PC-9 (cell line): ENCODE measurements at regions of chr6 and their contacts with region 1.

Region 1: DNA sequence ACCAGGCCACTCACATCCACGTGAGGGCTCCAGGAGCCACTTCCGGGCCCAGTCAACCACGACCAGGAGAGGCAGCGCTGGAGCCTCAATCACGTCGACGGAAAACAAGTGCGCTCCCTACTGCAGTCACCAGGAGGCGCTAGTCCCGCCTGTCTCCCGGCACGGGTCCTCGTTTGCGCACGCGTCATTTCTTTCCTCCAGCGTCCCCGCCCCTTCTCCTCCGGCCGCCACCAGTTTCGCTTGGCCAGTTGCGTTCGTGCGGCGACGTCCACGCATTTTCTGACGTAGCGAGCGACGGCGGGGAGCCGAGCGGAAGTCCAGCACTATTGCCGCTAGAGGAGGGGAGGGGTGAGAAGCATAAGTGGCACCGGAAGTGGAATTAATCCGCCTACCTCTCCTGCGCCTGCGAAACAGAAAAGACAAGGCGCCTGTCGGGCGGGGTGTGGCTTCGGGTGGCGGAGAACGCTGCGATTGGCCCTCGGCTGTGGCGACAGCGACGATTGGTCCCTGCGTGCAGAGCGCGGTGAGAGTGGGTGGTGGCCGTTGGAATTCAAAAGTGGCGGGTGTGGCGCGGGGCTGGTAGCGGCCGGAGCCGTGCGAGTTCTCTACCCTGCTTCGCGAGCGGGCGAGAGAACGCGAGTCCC is at the start of gene KIFC1:
- DNase-seq: peak; percentile 98
- H3K4me3 ChIP-seq: peak within 1 kb of the TSS; percentile 63
- H3K27ac ChIP-seq: peak within 1 kb of the TSS; percentile 78
- H3K4me1 ChIP-seq: peaks cover 39% of the 10 kb centered on the region
- H3K27me3 ChIP-seq: no peaks in the 10 kb centered on the region
- CTCF ChIP-seq: peak; percentile 90
- total RNA-seq, gene KIFC1: 82.9 and 91.4 TPM in 2 replicates

Region 2: DNA sequence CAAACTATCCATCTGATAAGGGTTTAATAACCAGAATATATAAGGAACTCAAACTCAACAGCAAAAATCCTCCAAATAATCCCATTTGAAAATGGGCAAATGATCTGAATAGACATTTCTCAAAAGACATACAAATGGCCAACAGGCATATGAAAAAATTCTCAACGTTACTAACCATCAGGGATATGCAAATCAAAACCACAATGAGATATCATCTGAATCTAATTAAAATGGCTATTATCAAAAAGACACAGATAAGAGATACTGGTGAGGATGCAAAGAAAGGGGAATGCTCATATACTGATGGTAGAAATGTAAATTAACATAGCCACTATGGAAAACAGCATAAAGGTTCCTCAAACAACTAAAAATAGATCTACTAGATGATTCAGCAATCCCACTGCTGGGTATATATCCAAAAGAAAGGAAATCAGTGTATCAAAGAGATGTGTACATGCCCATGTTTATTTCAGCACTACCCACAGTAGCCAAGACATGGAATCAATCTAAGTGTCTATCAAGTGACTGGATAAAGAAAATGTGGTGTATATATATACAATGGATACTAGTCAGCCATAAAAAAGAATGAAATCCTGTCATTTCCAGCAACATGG is 429.1 kb before region 1 on chr6:
- CTCF ChIA-PET with region 1: no interaction called
- POLR2A ChIA-PET with region 1: interaction called, 60 read pairs
- intact Hi-C with region 1: no loop called
- DNase-seq: no peak
- H3K4me3 ChIP-seq: no peak overlapping the region
- H3K27ac ChIP-seq: no peak overlapping the region
- H3K4me1 ChIP-seq: peaks cover 11% of the 10 kb centered on the region
- H3K27me3 ChIP-seq: no peaks in the 10 kb centered on the region
- CTCF ChIP-seq: no peak

Region 3: DNA sequence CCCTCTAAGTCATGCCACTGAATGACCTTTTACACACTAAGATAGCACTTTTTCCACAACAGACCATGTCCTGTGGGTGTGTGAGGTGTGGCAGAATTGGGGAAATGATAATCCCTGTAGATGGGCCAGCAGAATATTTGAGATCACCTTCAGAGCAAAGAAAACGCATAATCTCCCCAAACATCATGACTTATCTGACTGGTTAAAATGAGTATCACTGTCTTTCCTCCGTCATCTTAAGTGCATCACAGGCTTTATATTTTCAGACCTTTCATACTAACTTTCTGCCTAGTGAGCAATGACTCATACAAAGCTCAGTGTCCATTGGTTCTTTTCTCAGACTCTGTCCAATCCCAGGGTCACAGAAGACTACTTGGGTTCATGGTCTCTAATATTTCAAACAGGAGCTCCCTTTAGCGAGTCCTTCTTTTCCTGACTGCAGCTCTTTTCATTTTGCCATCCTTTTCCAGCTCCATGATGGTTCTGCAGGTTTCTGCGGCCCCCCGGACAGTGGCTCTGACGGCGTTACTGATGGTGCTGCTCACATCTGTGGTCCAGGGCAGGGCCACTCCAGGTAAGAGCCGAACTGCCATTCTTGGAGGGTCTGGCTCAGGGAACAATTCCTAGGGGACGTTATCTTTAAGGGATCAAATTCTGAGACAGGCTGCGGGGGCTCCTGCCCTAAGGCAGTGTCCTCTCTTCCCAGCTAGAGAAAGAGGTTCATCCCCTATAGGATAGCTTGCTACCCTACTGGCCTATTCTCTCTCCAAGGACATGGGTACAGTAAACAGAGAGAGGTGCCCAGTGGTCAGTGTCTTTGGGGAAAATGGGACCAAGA is 315.6 kb before region 1 on chr6 and contains the start of gene HLA-DPB1:
- CTCF ChIA-PET with region 1: no interaction called
- POLR2A ChIA-PET with region 1: no interaction called
- intact Hi-C with region 1: no loop called
- DNase-seq: no peak
- H3K4me3 ChIP-seq: no peak within 1 kb of the TSS
- H3K27ac ChIP-seq: no peak within 1 kb of the TSS
- H3K4me1 ChIP-seq: no peaks in the 10 kb centered on the region
- H3K27me3 ChIP-seq: peaks cover 78% of the 10 kb centered on the region
- CTCF ChIP-seq: no peak
- total RNA-seq, gene HLA-DPB1: not detected in 2 replicates

Region 4: GRCh38 chr6:33299237-33299944 is 92.0 kb before region 1 on chr6:
- CTCF ChIA-PET with region 1: no interaction called
- POLR2A ChIA-PET with region 1: no interaction called
- intact Hi-C with region 1: loop called (anchors 1 kb)
- DNase-seq: peak; percentile 72 to 87
- H3K4me3 ChIP-seq: peak overlapping the region; percentile 75
- H3K27ac ChIP-seq: peak overlapping the region; percentile 88
- H3K4me1 ChIP-seq: peaks cover 23% of the 10 kb centered on the region
- H3K27me3 ChIP-seq: no peaks in the 10 kb centered on the region
- CTCF ChIP-seq: peak; percentile 78

Region 5: GRCh38 chr6:33317669-33318425 is 73.6 kb before region 1 on chr6 and contains the start of gene ZBTB22:
- CTCF ChIA-PET with region 1: interaction called, 3 read pairs
- POLR2A ChIA-PET with region 1: interaction called, 5 read pairs
- intact Hi-C with region 1: loop called (anchors 1 kb)
- DNase-seq: peak; percentile 97 to 98
- H3K4me3 ChIP-seq: peak within 1 kb of the TSS; percentile 49
- H3K27ac ChIP-seq: peak within 1 kb of the TSS; percentile 66
- H3K4me1 ChIP-seq: peaks cover 51% of the 10 kb centered on the region
- H3K27me3 ChIP-seq: no peaks in the 10 kb centered on the region
- CTCF ChIP-seq: no peak
- total RNA-seq, gene ZBTB22: 16.5 and 20.8 TPM in 2 replicates

Region 6: DNA sequence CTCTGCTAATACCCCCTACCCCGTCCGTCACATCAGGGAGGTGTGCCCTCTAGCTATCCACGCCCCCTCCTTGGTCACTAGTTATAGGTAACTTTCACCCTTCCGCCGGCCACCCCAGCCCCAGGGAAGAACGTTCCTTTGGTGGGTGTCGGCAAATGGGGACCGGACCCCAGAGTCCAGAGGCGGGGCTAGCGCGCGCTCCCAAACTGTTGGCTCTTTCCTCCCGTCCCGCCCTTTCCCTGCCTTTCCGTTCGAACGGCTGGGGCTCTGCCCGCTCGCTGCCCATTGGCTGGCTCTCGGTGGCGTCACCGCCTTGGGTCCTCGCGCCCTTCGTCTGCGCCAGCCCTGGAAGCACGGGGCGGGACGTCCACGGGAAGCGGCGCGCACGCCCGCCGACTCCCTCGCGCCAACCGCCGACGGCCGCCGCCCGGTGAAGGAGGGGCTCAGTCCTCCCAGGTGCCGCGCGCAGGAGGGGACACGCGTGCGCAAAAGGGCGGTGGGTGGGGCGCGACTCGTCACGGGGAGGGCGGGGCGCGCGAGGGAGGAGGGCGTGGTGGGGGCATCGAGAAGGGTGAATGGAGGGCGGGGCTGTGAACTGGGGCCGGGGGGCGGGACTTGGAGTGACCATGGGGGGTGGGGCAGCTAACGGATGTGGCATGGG is 18.8 kb after region 1 on chr6:
- CTCF ChIA-PET with region 1: no interaction called
- POLR2A ChIA-PET with region 1: no interaction called
- intact Hi-C with region 1: loop called (anchors 1 kb)
- DNase-seq: peak; percentile 90 to 99
- H3K4me3 ChIP-seq: peak overlapping the region; percentile 84
- H3K27ac ChIP-seq: peak overlapping the region; percentile 35; the same call in 1 of the 2 replicates
- H3K4me1 ChIP-seq: peaks cover 11% of the 10 kb centered on the region; the same call in 1 of the 2 replicates
- H3K27me3 ChIP-seq: no peaks in the 10 kb centered on the region
- CTCF ChIP-seq: no peak